ENCODE measurements at regions of chr2 and their contacts with region 1.

Region 1: DNA sequence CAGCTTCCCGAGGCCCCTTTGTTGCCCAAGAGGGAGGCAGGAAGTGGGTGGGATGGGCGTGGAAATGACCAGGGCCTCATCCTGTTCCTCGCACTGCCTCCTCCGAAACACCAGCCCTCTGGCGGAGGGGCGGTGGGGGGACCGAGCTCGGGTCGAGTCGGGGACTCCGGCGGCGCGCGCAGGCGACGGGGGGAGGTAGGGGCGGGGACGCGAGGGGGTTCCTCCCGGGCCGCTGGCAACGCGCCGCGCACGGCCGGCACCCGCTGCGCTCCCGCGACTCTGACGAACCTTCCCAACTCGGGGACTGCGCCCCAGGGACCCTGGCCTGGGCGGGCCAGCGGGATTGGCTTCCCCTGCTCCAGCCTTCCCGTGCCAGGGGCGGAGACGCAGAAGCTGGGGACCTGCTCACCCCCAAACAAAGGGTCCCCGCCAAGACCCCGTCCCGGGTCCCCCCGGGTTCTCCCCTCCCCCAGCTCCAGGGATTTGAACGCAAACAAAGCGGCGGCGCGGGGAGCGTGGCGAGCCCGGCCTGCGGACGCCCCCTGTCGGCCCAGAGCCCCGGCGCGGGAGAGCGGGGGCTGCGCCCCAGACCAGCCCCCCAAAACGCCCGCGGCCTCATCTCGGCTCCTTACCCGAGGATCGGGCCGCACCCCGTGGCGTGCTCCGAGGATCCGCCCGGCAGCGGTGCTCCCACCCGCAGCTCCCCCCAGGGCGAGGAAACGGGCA is 1.2 kb downstream of the SEMA4C start:
- DNase-seq: peak in 9 of 10 donors; percentile 57 to 83 (median 67)
- H3K4me3 ChIP-seq: peak overlapping the region; percentile 70 to 99 (median 91)
- H3K27ac ChIP-seq: peak overlapping the region; percentile 67 to 100 (median 99)
- H3K27me3 ChIP-seq: no peaks in the 10 kb centered on the region
- CTCF ChIP-seq: peak; percentile 29 to 88 (median 66)

Region 2: DNA sequence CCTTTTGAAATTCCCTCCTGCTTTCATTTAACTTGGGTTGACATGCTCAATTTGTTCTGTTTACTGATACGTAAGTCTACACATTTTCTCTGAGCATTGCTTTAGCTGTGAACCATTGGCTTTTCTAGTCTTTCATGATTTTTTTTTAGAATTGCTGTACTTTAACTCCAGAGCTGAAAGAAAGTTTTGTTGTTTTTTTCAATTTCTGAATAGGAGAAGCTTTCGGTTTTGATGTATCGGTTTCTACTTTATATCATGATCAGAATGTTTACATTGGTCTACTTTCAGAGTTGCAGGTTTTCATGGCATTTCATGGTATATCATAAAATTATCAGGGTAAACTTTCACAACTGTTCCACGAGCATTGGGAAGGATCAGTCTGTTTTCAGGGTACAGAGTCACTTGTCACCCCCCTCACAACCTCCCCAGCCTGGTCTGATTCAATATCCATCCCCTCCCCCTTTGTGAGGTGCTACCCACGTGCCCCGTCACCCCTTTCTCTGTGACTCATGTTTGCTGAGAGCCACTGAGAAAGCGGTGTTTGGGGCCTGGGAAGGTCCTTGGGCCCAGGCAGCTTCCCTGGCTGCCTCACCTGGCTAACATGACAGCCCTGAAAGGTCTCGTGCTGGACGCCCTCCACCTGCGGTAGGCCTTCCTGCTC is 737.4 kb before region 1 on chr2:
- intact Hi-C with region 1: no loop called
- DNase-seq: no peak
- H3K4me3 ChIP-seq: no peak overlapping the region
- H3K27ac ChIP-seq: no peak overlapping the region
- H3K27me3 ChIP-seq: no peaks in the 10 kb centered on the region
- CTCF ChIP-seq: no peak

Region 3: GRCh38 chr2:96856776-96857673 is 11.7 kb before region 1 on chr2:
- intact Hi-C with region 1: loop called in 1 of 2 experiments (anchors 1 kb)
- DNase-seq: peak in 3 of 10 donors; percentile 29 to 61 (median 45)
- H3K4me3 ChIP-seq: peak overlapping the region; percentile 55 to 100 (median 87)
- H3K27ac ChIP-seq: peak overlapping the region; percentile 36 to 95 (median 90)
- H3K27me3 ChIP-seq: no peaks in the 10 kb centered on the region
- CTCF ChIP-seq: peak in 1 of 56 donors; percentile 9

Region 4: GRCh38 chr2:96888072-96889011 is 19.6 kb after region 1 on chr2:
- intact Hi-C with region 1: loop called in 1 of 2 experiments (anchors 1 kb)
- DNase-seq: peak in 8 of 10 donors; percentile 52 to 80 (median 70)
- H3K4me3 ChIP-seq: peak overlapping the region in 18 of 59 donors; percentile 0 to 33 (median 14)
- H3K27ac ChIP-seq: peak overlapping the region; percentile 79 to 98 (median 91)
- H3K27me3 ChIP-seq: no peaks in the 10 kb centered on the region
- CTCF ChIP-seq: peak in 3 of 56 donors; percentile 2 to 13 (median 10)

Region 5: DNA sequence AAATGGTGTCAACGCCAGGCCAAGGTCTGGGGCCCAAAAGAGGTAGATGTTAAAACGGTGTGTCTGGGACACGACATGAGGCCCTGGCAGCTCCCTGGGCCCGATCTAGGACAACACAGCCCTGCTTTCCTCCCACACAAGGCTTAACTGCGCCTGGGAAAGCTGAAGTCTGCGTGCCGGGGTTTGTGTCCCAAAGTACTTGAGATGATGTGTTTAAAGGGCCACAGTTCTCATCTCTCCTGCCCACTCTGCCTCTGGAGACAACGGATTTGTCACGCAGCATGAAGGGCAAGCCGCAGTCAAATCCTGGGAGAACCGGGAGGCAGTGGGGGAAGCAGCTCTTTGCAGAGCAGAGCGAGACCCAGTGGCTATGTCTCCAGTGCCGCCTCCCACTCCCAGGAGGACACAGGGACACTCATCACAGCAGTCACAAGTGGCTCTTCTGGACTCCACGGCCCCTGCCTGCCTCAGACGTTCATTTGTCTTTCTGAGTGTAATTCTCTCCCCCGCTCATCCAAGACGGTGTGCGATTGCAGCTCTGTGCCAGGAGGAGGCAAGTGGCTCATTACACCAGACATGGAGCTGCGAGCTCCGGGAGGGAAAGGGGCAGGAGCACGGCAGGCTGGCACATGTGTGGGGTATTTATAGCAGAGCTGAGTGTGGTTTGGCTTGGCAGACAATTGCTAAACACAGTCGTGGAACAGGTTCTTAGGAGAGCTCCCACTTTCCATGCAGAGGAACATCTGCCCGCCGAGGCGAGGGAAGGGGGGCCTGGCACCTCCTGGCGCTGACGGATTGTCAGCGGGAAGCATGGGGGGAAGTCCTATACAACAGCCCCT is 58.9 kb after region 1 on chr2:
- intact Hi-C with region 1: loop called in 1 of 2 experiments (anchors 10 kb)
- DNase-seq: peak; percentile 50 to 90 (median 82)
- H3K4me3 ChIP-seq: peak overlapping the region in 48 of 59 donors; percentile 1 to 49 (median 25)
- H3K27ac ChIP-seq: peak overlapping the region; percentile 71 to 100 (median 97)
- H3K27me3 ChIP-seq: no peaks in the 10 kb centered on the region
- CTCF ChIP-seq: peak in 8 of 56 donors; percentile 6 to 26 (median 17)

Region 6: DNA sequence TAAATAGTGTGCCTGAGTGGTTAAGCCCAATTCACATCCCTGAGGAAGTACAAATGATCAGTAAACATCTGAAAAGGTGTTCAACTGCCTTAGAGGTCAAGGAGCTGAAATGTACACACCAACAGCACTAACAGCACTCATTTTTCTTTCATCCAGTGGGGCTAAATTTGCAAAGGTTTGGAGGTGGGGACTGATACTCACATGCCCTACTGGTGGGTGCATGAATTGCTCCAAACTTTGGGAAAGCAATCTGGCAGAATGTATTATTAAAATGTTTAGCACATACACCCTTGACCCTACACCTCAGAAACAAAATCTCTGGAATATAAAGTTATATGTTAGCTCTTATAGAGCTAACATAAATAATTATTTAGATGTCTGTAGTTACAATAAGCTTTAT is 136.6 kb after region 1 on chr2:
- intact Hi-C with region 1: no loop called
- DNase-seq: no peak
- H3K4me3 ChIP-seq: no peak overlapping the region
- H3K27ac ChIP-seq: no peak overlapping the region
- H3K27me3 ChIP-seq: no peaks in the 10 kb centered on the region
- CTCF ChIP-seq: peak in 9 of 56 donors; percentile 10 to 38 (median 17)